CD4-positive, alpha-beta memory T cell (primary cell): ENCODE measurements at regions of chr20 and their contacts with region 1.

Region 1: DNA sequence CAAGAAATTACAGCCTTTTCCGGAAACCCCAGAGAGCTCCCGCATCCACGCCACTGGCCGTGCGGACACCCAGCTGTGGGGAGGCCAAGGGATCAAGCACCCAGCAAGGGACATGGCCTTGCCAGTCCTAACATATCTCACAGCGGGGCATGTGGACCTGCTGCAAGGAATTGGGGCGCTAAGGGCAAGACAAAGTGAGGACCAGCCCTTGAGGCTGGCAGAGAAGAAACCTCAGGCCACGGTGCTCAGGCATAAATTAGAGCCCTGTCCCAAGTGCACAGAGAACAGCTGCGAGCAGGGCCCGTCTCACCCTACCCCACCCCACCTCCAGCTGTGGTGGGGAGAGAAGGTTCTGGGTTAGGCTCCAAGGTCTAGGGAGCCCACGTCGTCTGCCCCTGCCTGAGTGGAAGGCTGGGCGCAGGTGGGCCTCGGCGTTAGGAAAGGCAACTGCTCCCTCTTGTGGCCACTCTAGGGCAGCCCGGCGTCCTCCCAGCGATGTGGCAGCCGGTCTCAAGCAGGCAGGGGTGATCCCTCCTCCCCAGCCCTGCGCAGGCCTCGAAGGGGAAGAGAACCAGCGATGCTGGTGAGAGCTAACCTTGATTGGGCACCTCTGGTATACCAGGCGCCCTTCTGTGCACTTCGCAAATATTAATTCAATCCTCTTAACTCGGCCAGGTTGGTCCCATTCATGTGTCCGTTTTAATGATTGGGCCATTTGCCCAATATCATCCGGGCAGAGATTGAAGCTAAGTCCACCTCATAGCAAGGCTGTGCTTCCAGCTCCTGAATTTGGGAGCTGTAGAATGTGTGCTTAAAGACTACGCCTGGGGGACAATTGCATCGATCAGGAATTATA is 235.8 kb downstream of the NFATC2 start:
- DNase-seq: peak; percentile 55 to 65 (median 59)
- H3K4me3 ChIP-seq: no peak overlapping the region
- H3K4me3 Mint-ChIP-seq: no peak overlapping the region
- H3K27ac ChIP-seq: no peak overlapping the region
- H3K27ac Mint-ChIP-seq: peak overlapping the region in 2 of 7 donors; percentile 12 to 39
- H3K4me1 ChIP-seq: no peaks in the 10 kb centered on the region
- H3K4me1 Mint-ChIP-seq: peaks cover 0 to 6% (median 3%) of the 10 kb centered on the region in 4 donors
- H3K27me3 ChIP-seq: no peaks in the 10 kb centered on the region
- H3K27me3 Mint-ChIP-seq: peaks cover 13 to 15% of the 10 kb centered on the region in 2 donors

Region 2: DNA sequence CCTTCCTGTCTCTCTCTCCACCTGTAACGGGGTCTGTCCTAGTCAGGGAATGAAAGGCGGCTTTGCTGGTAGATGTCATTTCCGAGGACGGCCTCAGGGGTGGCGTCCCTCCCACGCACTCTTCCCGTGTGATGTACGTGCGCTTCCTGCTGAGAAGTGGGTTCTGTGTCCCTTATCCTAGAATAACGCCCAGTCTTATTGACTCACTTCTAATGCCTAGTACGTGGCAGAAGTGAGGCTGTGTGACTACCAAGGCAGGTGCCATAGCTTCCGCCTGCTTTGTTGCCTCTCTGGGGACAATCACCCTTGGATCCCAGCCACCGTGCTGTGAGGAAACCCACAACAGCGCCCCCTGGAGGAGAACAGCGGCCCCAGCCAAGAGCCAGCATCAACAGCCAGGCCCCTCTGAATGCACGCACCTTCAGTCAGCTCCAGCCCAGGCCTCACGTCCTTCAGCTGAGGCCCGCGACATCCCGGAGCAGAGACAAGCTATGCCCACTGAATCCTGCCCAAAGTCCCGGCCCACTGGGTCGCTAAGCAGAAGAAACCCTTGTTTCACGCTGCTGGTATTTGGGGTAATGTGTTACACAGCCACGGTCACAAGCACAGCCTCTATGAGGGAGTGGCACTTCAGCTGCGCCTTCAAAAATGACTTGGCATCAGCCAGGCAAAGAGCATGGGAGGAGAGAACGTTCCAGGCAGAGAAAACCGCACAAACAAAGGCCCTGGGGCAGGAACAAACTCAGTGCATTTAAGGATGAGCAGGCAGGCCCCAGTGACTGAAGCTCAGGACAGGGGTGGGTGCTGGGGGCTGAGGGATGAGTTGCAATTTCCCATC is 11.5 kb after region 1 on chr20:
- CTCF ChIA-PET with region 1: interaction called, 11 read pairs
- POLR2A ChIA-PET with region 1: no interaction called
- intact Hi-C with region 1: no loop called
- DNase-seq: peak; percentile 16 to 49 (median 24)
- H3K4me3 ChIP-seq: no peak overlapping the region
- H3K4me3 Mint-ChIP-seq: peak overlapping the region in 5 of 8 donors; percentile 47 to 79 (median 63)
- H3K27ac ChIP-seq: no peak overlapping the region
- H3K27ac Mint-ChIP-seq: peak overlapping the region in 2 of 7 donors; percentile 34 to 36
- H3K4me1 ChIP-seq: no peaks in the 10 kb centered on the region
- H3K4me1 Mint-ChIP-seq: peaks cover 0 to 5% (median 1%) of the 10 kb centered on the region in 4 donors
- H3K27me3 ChIP-seq: no peaks in the 10 kb centered on the region
- H3K27me3 Mint-ChIP-seq: peaks cover 4 to 10% of the 10 kb centered on the region in 2 donors

Region 3: GRCh38 chr20:51326201-51326819 is 19.6 kb after region 1 on chr20:
- CTCF ChIA-PET with region 1: interaction called, 28 read pairs
- POLR2A ChIA-PET with region 1: no interaction called
- intact Hi-C with region 1: no loop called
- DNase-seq: peak in 2 of 5 donors; percentile 28 to 37
- H3K4me3 ChIP-seq: no peak overlapping the region
- H3K4me3 Mint-ChIP-seq: no peak overlapping the region
- H3K27ac ChIP-seq: no peak overlapping the region
- H3K27ac Mint-ChIP-seq: no peak overlapping the region
- H3K4me1 ChIP-seq: no peaks in the 10 kb centered on the region
- H3K4me1 Mint-ChIP-seq: no peaks in the 10 kb centered on the region
- H3K27me3 ChIP-seq: no peaks in the 10 kb centered on the region
- H3K27me3 Mint-ChIP-seq: peaks cover 6 to 20% of the 10 kb centered on the region in 2 donors